HEK293 (cell line): ENCODE measurements at regions of chr17 and their contacts with region 1.

Region 1: DNA sequence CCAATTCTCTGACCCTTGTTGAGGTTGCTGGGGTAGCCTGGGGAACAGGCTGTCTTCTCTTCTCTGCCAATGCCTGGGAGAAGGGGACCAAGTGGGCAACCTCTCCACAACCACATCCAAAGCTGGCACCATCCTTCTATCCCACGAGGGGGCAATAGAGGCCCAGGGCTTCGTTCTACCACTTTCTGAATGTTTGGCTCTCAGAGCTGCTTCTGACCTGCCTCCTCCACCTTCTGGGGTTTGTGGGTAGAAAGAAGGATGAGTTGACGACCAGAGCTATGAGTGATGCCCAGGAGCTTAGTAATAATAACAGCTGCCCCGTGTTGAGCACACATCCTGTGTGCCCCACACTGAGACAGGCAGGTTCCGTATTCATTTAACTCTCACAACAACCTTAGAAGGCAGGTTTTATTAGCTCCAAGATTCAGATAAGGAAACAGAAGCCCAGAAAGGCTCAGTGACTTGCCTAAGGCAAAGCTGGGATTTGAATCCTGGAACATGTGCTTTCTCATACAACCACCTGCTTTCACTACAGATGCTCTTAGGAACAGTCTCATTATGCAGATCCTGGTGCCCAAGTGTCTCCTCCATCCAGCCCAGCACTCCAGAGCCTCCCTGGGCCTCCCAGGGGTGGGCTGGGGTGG is 11.1 kb downstream of the TSPOAP1 start:
- H3K4me3 ChIP-seq: no peak overlapping the region
- H3K27ac ChIP-seq: peak overlapping the region; percentile 43; the same call in 1 of the 2 replicates
- H3K4me1 ChIP-seq: peaks cover 9% of the 10 kb centered on the region
- CTCF ChIP-seq: peak; percentile 81

Region 2: DNA sequence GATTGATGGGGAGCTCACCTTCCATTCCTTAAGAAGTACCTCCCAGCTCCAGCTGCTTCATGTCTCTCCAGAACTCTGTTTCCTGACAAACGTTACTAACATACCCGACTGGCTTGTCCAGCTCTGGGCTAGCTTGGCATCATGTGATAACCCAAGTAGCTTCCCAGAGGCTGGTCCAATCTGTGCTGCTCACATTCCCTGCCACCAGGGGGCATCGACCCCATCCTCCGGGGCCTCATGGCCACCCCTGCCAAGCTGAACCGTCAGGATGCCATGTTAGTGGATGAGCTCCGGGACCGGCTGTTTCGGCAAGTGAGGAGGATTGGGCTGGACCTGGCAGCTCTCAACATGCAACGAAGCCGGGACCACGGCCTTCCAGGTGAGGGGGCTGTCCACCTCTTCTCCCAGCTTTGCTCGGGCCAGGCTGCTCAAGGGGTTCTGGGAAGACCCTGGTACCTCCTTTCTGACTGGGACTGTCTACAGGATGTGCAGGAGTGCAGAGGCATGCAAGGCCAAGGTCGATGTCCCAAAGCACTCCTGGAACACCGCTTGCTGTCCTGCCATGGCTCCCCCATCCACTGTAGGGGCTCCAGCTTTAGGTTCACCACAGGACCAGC is 117.4 kb before region 1 on chr17:
- CTCF ChIA-PET with region 1: interaction called, 12 read pairs
- POLR2A ChIA-PET with region 1: no interaction called
- H3K4me3 ChIP-seq: no peak overlapping the region
- H3K27ac ChIP-seq: no peak overlapping the region
- H3K4me1 ChIP-seq: no peaks in the 10 kb centered on the region; the same call in 1 of the 2 replicates
- CTCF ChIP-seq: peak; percentile 63

Region 3: GRCh38 chr17:58337600-58338453 is 20.3 kb after region 1 on chr17:
- CTCF ChIA-PET with region 1: interaction called, 10 read pairs
- POLR2A ChIA-PET with region 1: interaction called, 11 read pairs
- H3K4me3 ChIP-seq: no peak overlapping the region
- H3K27ac ChIP-seq: no peak overlapping the region
- H3K4me1 ChIP-seq: no peaks in the 10 kb centered on the region; the same call in 1 of the 2 replicates
- CTCF ChIP-seq: no peak

Region 4: DNA sequence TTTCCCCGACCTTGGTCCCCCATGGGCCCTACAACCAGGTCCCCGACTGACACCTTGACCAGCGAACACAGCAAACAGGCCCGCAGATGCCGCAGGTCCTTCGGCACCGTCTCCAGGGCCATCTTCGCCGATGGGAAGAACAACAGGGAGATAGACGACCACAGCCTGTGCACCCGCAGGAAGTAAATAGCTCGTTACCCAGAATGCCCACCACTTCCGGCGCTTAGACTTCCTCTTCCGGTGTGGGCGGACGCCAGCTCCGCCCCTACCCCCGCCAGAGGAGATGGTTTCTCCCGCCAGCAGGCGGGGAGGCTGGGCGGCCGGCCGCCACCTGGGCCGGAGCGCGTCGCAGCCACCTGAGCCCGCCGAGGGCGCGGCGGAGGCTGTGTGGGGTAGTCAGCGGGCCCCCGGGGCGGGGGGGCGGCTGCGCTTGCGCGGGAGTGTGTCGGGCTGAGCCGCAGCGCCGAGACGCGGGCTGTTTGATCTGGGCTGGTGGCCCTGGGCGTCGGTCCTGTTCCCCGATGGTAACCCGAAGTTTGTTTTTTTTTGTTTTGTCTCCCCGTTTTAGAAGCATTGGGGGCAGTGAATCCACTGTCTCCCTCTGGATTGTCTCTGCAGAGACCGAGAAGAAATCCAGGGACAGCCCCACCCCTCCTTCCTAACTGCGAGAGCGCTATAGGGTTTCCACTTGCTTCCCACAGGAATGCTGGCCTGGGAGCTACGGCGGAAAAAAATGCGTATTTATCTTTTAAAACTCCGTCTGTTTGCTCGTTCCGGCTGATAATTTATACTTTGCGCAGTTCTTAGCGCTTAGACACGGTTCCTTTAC is 34.7 kb after region 1 on chr17 and contains the start of gene SUPT4H1:
- CTCF ChIA-PET with region 1: interaction called, 16 read pairs
- POLR2A ChIA-PET with region 1: interaction called, 30 read pairs
- H3K4me3 ChIP-seq: peak within 1 kb of the TSS; percentile 93
- H3K27ac ChIP-seq: peak within 1 kb of the TSS; percentile 96
- H3K4me1 ChIP-seq: peaks cover 9% of the 10 kb centered on the region
- CTCF ChIP-seq: no peak

Region 5: GRCh38 chr17:58417300-58418092 is 100.0 kb after region 1 on chr17 and contains the start of gene RNF43:
- CTCF ChIA-PET with region 1: interaction called, 100 read pairs
- POLR2A ChIA-PET with region 1: interaction called, 29 read pairs
- H3K4me3 ChIP-seq: peak within 1 kb of the TSS; percentile 52
- H3K27ac ChIP-seq: peak within 1 kb of the TSS; percentile 89
- H3K4me1 ChIP-seq: peaks cover 10% of the 10 kb centered on the region
- CTCF ChIP-seq: peak; percentile 98

Region 6: DNA sequence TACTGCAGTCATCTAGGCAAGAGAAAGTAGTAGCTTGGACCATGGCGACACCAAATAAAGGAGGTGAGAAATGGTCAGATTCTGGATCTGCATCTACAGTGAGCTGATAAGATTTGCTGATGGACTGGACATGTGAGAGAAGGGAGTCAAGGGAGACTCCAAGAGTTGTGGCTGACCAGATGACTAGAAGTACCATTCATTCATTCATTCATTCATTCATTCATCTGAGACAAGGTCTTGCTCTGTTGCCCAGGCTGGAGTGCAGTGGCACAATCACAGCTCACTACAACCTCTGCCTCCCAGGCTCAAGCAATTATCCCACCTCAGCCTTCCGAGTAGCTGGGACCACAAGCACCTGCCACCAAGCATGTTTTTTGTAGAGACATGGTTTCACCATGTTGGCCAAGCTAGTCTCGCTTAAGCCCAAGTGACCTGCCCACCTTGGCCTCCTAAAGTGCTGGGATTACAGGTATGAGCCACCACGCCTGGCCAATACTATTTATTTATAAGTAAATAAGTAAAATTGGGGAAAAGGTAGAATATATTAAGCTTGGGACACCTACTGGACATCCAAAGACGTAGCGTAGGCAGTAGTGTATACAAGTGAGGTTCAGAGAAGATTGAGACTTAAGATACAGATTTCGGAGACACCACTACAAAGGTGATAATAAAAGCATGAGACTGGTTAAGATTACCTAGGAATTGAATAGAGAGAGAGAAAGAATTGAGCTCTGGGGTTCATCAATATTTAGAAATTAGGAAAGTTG is 115.4 kb after region 1 on chr17:
- CTCF ChIA-PET with region 1: interaction called, 32 read pairs
- POLR2A ChIA-PET with region 1: no interaction called
- H3K4me3 ChIP-seq: no peak overlapping the region
- H3K27ac ChIP-seq: no peak overlapping the region
- H3K4me1 ChIP-seq: no peaks in the 10 kb centered on the region
- CTCF ChIP-seq: no peak